ENCODE measurements at regions of chr2 and their contacts with region 1.

Region 1: GRCh38 chr2:98601532-98602132 is 6.7 kb downstream of the COA5 start:
- DNase-seq: peak; percentile 53
- H3K4me3 Mint-ChIP-seq: no peak overlapping the region
- H3K27ac Mint-ChIP-seq: no peak overlapping the region
- H3K4me1 Mint-ChIP-seq: peaks cover 30% of the 10 kb centered on the region
- H3K27me3 Mint-ChIP-seq: no peaks in the 10 kb centered on the region
- CTCF ChIP-seq: peak; percentile 65

Region 2: GRCh38 chr2:98568881-98569793 is 32.5 kb before region 1 on chr2:
- CTCF ChIA-PET with region 1: no interaction called
- POLR2A ChIA-PET with region 1: no interaction called
- intact Hi-C with region 1: loop called (anchors 5 kb)
- DNase-seq: peak; percentile 55
- H3K4me3 Mint-ChIP-seq: no peak overlapping the region
- H3K27ac Mint-ChIP-seq: no peak overlapping the region
- H3K4me1 Mint-ChIP-seq: no peaks in the 10 kb centered on the region
- H3K27me3 Mint-ChIP-seq: no peaks in the 10 kb centered on the region
- CTCF ChIP-seq: peak; percentile 77

Measured in MCF 10A (cell line).